GM18951 (cell line): ENCODE measurements at regions of chr3 and their contacts with region 1.

Region 1: GRCh38 chr3:149717391-149718056 is 34.8 kb downstream of the COMMD2 start:
- POLR2A ChIP-seq: no peak

Region 2: GRCh38 chr3:149382091-149382467 is 335.4 kb before region 1 on chr3:
- in situ Hi-C with region 1: no loop called
- POLR2A ChIP-seq: no peak

Region 3: GRCh38 chr3:149553781-149554451 is 163.6 kb before region 1 on chr3:
- in situ Hi-C with region 1: loop called (anchors 25 kb)
- POLR2A ChIP-seq: no peak

Region 4: GRCh38 chr3:150359381-150359780 is 641.9 kb after region 1 on chr3:
- in situ Hi-C with region 1: no loop called
- POLR2A ChIP-seq: no peak